AG04449 (cell line): ENCODE measurements at regions of chr1 and their contacts with region 1.

Region 1: DNA sequence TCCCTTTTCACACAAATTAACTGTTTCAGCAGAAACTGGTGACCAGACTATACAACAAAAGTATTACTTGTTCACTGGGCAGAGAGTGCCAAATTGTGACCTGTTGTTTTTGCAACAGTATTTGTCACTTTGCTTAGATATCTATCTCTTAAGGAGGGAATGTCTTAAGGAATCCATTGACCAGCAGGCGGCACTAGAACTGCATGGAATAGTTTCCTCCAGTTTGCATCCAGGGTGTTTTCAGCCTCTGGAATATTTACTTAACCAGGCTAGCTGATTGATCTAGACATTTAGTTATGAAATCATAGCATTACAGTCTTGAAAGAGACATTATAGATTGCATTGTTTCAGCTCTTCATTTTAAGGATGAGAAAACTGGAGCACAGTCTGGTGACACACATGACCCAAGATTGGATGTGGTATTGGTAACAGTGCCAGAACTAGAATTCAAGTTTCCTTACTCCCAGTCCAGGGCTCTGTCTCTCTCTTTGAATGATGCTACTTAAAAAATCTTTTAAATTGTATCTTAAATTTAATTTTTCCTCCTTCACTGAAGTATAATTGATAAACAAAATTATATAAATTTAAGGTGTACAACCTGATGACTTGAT is 16.9 kb downstream of the RPTN start:
- DNase-seq: peak; percentile 23
- H3K4me3 ChIP-seq: no peak overlapping the region
- CTCF ChIP-seq: peak; percentile 65

Region 2: DNA sequence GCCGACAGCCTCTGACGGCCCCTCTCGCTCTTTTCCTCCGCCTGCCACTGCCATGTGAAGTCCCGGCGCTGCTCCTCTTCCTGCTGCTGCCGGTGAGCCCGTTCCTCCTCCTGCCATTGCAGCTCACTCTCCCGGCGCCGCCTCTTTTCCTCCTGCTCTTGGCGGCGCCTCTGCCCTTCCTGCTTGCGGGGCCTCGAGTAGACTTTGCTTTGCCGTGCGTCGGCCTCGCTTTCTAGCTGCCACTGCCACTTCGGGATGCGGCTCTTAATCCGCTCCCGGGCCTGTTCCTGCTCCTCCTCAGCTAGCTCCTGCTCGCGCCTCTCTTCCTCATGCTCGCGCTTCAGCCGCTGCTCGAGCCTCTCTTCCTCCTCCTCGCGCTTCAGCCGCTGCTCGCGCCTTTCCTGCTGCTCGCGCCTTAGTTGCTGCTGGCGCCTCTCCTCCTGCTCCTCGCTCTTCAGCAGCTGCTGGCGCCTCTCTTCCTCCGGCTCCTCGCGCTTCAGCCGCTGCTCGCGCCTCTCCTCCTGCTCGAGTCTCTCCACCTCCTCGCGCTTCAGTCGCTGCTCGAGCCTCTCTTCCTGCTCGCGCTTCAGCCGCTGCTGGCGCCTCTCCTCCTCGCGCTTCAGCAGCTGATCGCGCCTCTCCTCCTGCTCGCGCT is 31.1 kb before region 1 on chr1:
- CTCF ChIA-PET with region 1: interaction called, 11 read pairs
- POLR2A ChIA-PET with region 1: no interaction called
- DNase-seq: no peak
- H3K4me3 ChIP-seq: peak overlapping the region; percentile 52
- CTCF ChIP-seq: no peak

Region 3: GRCh38 chr1:152162806-152163463 is 20.9 kb after region 1 on chr1:
- CTCF ChIA-PET with region 1: interaction called, 16 read pairs
- POLR2A ChIA-PET with region 1: no interaction called
- DNase-seq: peak; percentile 76
- H3K4me3 ChIP-seq: no peak overlapping the region
- CTCF ChIP-seq: no peak